ENCODE measurements at regions of chr4 and their contacts with region 1.

Region 1: DNA sequence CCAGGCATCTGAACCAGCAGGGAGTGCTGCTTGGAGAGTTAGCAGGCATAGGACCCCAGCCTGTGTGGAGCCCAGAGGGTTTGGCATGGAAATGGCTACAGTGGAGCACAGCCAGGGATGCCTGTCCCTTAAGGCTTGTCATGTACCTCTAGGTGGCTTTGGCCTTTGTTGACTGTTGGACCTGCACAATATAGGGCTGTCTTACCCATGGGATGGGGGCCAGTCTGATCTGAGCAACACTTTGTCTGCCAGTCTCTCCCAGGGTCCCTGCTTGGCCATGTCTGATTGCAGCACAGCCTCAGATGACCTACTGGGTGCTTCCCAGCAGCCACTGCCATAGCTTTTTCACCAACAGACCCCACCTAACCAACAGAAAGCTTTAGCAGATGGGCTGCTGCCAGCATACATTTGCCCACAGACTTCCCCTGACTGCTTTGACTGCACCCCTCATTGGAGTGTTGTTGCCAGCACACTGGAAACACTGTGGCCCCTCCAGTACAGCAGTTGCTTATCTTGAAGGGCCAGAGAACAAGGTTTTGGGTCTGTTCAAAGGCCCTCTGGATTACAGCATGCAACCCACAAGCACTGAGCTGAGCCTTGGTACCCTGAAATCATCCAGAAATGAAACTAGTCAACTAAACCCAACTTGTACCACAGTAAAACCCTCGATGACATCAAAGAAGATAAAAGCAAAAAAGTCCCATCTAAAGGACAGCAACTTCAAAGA is 22.1 kb downstream of the ANAPC10 start:
- DNase-seq: no peak
- H3K4me3 ChIP-seq: no peak overlapping the region
- H3K27ac ChIP-seq: no peak overlapping the region
- H3K4me1 ChIP-seq: no peaks in the 10 kb centered on the region
- H3K27me3 ChIP-seq: no peaks in the 10 kb centered on the region
- CTCF ChIP-seq: no peak
- POLR2A ChIP-seq: no peak

Region 2: DNA sequence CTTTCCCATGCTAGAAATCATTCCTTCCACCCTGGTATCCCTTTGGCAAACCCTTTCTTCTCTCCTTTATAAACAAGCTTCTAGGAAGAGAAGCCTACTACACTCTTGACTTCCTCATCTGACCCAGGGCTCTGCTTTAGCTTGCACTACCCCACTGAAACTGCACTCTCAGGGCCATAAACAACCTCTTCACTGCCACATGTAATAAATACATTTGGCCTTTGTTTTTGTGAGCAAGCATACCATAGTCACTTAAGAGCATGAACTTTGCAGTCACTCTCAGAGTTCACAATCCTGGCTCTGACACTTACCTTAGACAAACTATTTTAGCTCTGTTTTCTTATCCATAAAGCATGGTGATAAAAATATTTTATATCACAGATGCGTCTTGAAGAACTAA is 1941.9 kb before region 1 on chr4:
- intact Hi-C with region 1: loop called (anchors 5 kb)
- DNase-seq: no peak
- H3K4me3 ChIP-seq: no peak overlapping the region
- H3K27ac ChIP-seq: no peak overlapping the region
- H3K4me1 ChIP-seq: no peaks in the 10 kb centered on the region
- H3K27me3 ChIP-seq: no peaks in the 10 kb centered on the region
- CTCF ChIP-seq: no peak
- POLR2A ChIP-seq: no peak

Region 3: GRCh38 chr4:145097821-145098674 is 22.1 kb after region 1 on chr4 and contains the starts of genes ABCE1 and ANAPC10:
- intact Hi-C with region 1: no loop called
- DNase-seq: peak in 1 of 2 donors; percentile 97
- H3K4me3 ChIP-seq: peak within 1 kb of the TSS; percentile 77 to 91
- H3K27ac ChIP-seq: peak within 1 kb of the TSS; percentile 90
- H3K4me1 ChIP-seq: peaks cover 55% of the 10 kb centered on the region
- H3K27me3 ChIP-seq: no peaks in the 10 kb centered on the region
- CTCF ChIP-seq: no peak
- POLR2A ChIP-seq: peak in 1 of 2 donors; percentile 51
- total RNA-seq, gene ABCE1: 47.1 TPM
- total RNA-seq, gene ANAPC10: 17.4 TPM

Measured in vagina (tissue), 2 donors.